ENCODE measurements at regions of chr12 and their contacts with region 1.

Region 1: DNA sequence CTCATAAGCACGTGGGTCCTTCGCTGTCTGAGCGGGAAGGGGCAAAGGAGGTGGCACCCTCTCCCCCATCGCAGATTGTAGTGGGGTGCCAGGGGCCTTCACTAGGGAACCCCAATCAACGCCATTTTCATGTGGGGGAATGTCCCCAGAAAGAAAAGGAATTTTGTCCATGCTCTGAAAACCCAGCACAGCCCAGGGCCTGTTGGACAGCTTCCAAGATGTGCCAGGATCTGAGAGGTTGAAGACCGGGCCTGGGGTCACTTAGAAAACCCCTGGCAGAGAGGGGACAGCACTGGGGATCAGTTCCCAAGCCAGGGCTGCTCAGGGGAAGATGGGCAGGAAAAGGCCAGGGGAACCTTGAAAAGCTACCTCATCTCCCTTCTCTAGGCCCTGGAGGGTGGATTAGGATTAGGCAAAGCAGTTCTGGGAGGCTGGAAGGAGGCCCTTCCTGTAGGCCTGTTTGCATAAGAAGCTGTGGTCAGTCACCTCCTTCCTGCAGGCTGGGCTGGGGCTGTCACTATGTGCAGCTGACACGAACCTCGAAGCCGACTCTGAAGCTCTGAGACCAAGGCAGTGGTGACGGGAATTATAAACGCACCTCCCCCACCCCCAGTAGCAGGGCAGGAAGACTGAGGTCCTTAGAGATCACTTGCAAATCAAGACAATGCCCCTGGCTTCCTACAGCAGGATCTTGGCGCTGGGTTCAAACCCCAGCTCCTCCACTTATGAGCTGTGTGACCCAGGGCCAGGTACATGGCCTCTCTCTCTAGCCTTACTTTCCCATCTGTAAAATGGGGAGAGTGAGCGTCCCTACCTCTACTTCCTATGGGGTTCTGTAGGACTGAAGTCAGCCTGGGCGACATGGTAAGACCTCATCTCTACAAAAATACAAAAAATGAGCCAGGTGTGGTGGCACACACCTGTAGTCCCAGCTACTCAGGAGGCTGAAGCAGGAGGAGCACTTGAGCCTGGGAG is 29.0 kb downstream of the TESC start:
- DNase-seq: no peak
- H3K4me3 ChIP-seq: no peak overlapping the region
- H3K27ac ChIP-seq: no peak overlapping the region
- H3K4me1 ChIP-seq: no peaks in the 10 kb centered on the region
- H3K27me3 ChIP-seq: peaks cover 1% of the 10 kb centered on the region
- CTCF ChIP-seq: no peak

Region 2: GRCh38 chr12:117134059-117134458 is 63.8 kb after region 1 on chr12:
- CTCF ChIA-PET with region 1: no interaction called
- dilution Hi-C with region 1: loop called (anchors 5 kb)
- in situ Hi-C with region 1: no loop called
- intact Hi-C with region 1: no loop called
- DNase-seq: no peak
- H3K4me3 ChIP-seq: no peak overlapping the region
- H3K27ac ChIP-seq: no peak overlapping the region
- H3K4me1 ChIP-seq: no peaks in the 10 kb centered on the region
- H3K27me3 ChIP-seq: no peaks in the 10 kb centered on the region
- CTCF ChIP-seq: no peak